PC-3 (cell line): ENCODE measurements at regions of chr10 and their contacts with region 1.

Region 1: DNA sequence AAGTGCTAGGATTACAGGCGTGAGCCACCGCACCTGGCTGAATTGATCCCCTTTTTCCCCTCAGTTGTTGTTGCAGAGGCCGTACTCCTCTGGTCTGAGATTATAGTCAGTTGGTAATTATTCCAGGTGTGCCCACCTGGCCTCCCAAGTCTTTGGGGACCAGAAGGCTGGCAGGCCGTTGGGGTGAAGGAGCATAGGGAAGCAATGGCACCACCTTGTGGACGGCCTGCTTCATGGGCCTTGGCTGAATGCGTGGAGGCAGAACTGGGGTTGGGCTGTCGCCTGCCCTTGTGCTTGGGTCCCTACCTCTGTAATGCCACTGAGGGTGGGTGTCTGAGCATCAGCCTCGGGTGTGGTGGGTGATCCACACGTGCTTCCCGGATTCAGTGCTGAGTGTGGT is 125.7 kb downstream of the RGS10 start:
- DNase-seq: peak; percentile 58
- ATAC-seq: peak; percentile 83
- H3K4me3 ChIP-seq: no peak overlapping the region
- H3K27ac ChIP-seq: no peak overlapping the region
- H3K4me1 ChIP-seq: no peaks in the 10 kb centered on the region
- H3K27me3 ChIP-seq: no peaks in the 10 kb centered on the region
- CTCF ChIP-seq: peak; percentile 74

Region 2: GRCh38 chr10:119199231-119199992 is 217.4 kb before region 1 on chr10:
- CTCF ChIA-PET with region 1: interaction called, 4 read pairs
- POLR2A ChIA-PET with region 1: no interaction called
- intact Hi-C with region 1: loop called (anchors 1 kb)
- DNase-seq: peak; percentile 70
- ATAC-seq: peak; percentile 88
- H3K4me3 ChIP-seq: no peak overlapping the region
- H3K27ac ChIP-seq: no peak overlapping the region
- H3K4me1 ChIP-seq: peaks cover 18% of the 10 kb centered on the region
- H3K27me3 ChIP-seq: no peaks in the 10 kb centered on the region
- CTCF ChIP-seq: peak; percentile 76

Region 3: DNA sequence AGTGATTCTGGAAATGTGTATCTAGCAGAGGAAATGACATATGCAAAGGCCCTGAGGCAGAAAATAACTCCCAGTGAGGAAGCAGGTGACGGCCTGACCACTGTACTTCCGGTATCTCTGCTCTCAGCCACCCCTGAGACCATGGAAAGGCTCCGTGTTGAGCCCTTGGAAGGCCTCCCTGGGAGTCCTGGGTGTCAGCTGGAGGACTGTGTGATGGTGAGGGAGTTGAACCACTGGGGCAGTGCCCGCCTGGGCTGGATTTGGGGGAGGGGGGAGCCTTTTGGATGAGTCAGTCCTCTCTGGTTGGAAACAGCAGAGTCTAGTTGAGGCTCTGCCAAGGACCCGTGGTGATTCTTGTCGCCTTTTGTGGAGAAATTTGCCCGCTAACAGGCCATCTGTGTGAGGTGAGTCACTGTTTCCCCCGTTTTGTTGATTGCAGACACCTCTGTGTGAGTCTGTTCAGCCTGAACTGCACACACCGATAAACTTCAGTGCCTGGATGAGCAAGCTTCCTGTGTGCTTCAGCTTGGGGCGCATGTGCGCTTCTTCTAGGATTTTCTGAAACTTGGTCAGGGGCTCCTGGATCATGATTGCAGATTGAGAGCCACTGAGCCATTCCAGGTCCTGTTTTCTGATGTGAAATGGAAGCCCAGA is 110.9 kb before region 1 on chr10:
- CTCF ChIA-PET with region 1: no interaction called
- POLR2A ChIA-PET with region 1: no interaction called
- intact Hi-C with region 1: loop called (anchors 10 kb)
- DNase-seq: peak; percentile 89
- ATAC-seq: peak; percentile 88
- H3K4me3 ChIP-seq: no peak overlapping the region; the same call in 1 of the 2 replicates
- H3K27ac ChIP-seq: peak overlapping the region; percentile 65
- H3K4me1 ChIP-seq: peaks cover 58% of the 10 kb centered on the region
- H3K27me3 ChIP-seq: no peaks in the 10 kb centered on the region
- CTCF ChIP-seq: no peak

Region 4: GRCh38 chr10:119644205-119644814 is 227.5 kb after region 1 on chr10:
- CTCF ChIA-PET with region 1: no interaction called
- POLR2A ChIA-PET with region 1: no interaction called
- intact Hi-C with region 1: no loop called
- DNase-seq: no peak
- ATAC-seq: no peak
- H3K4me3 ChIP-seq: no peak overlapping the region
- H3K27ac ChIP-seq: no peak overlapping the region
- H3K4me1 ChIP-seq: no peaks in the 10 kb centered on the region
- H3K27me3 ChIP-seq: no peaks in the 10 kb centered on the region
- CTCF ChIP-seq: 0 out of 2 replicates have a peak, but pooled peaks have one; percentile 12